ENCODE measurements at regions of chr17 and their contacts with region 1.

Region 1: GRCh38 chr17:6340708-6341107 is 94.2 kb downstream of the AIPL1 start:
- DNase-seq: no peak

Region 2: DNA sequence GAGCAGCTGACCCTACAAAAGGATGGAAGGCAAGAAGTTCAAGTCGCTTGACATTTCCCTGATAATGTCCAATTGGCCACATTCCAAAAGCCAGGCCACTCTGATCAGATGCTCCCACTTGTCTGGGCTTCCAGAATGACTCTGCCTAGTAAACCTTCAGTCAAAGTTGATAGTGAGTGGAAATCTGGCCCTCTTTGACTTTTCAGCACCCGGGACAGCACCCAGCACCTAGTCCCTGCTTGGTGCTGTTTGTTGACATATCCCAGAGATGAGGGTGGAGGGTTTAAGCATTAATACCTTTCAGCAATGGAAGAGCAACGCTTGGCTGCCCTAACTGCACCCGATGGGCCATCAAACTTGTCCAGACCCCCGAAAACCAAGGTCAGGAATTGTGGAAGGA is 37.0 kb before region 1 on chr17:
- intact Hi-C with region 1: no loop called
- DNase-seq: no peak

Region 3: GRCh38 chr17:6323582-6324356 is 16.9 kb before region 1 on chr17:
- intact Hi-C with region 1: loop called (anchors 2 kb)
- DNase-seq: no peak

Region 4: GRCh38 chr17:6473128-6473767 is 132.5 kb after region 1 on chr17:
- intact Hi-C with region 1: no loop called
- DNase-seq: peak; percentile 84

Region 5: DNA sequence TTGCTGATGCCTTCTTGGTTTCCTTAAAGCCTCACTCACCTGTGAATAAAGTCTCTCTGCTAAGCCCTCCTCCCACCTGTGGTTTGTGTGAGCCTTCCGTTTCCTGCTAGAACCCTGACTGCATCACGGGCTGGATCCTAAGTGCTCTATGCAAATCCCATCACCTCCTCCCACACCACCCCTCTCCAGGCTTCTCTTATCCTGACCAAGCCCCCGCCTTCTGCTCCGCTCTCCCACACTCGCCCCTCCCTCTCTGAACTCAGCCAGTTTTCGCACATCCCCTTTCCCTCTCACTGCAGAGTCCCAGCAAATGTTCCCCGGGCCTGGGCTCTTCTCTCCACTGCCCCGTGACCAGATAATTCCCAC is 155.4 kb after region 1 on chr17:
- intact Hi-C with region 1: no loop called
- DNase-seq: peak; percentile 22

Region 6: DNA sequence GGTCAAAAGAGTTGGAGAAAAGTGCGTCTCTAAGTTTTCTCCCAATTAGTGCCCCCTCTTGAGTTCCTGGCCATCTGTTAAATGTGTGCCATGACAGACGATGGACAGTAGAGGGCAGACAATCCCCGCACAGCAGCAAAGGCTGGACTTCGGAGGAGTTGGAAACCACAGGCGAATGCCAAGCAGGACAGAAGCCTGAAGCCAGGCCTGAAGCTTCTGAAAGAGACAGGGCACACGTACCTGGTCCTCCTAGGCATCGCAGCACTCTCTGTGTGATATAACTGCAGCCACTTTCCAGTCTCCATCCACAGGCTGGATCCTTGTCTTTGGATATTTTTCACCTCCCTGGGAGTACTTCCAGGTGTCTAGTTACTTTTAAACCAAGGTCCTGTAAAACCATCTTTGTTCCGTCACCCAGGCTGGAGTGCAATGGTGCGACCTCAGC is 325.4 kb after region 1 on chr17:
- intact Hi-C with region 1: no loop called
- DNase-seq: peak; percentile 86